CD4-positive, alpha-beta T cell (primary cell): ENCODE measurements at regions of chr15 and their contacts with region 1.

Region 1: DNA sequence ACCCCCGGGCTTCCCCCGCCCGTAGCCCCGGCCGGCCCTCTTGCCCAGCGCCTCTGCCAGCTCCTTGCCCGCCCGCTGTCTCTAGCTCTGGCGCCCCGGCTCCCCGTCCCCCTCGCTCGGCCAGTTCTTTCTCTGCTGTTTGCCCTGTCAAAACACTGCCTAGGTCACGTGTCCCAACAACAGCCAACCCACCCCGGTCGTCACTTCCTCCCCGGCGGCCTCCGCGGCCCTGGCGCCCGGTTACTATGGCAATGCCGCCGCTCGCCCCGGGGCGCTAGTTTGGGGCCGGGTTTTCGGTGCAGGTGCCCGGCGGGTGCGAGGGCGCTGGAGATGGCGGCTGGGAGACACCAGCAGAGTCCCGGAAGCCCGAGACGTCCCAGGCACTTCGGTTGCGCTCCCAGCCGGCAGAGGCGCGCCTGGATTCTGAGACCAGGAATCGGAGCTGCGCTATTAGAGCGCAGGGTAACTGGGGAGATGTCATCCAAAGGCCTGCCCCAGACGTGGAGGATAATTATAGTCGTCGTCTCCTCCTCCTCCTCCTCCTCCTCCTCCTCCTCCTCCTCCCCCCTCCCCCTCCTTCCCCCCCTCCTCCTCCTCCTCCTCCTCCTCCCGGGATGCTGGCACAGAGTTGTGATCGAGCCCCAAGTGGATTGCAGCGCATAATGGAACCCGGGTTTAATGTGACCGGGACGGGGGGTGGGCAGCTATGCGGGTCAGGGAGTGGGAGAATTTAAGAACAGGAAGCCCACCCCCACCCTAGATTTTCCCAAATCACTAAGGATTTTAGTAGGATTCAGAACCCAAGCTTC is at the start of gene ATOSA:
- DNase-seq: peak; percentile 83 to 96 (median 90)
- ATAC-seq: peak; percentile 68
- H3K4me3 ChIP-seq: peak within 1 kb of the TSS; percentile 94
- H3K4me3 Mint-ChIP-seq: peak within 1 kb of the TSS; percentile 96
- H3K27ac ChIP-seq: peak within 1 kb of the TSS; percentile 97 to 99
- H3K27ac Mint-ChIP-seq: peak within 1 kb of the TSS; percentile 97
- H3K4me1 ChIP-seq: peaks cover 14% of the 10 kb centered on the region
- H3K4me1 Mint-ChIP-seq: peaks cover 75% of the 10 kb centered on the region
- H3K27me3 ChIP-seq: no peaks in the 10 kb centered on the region
- H3K27me3 Mint-ChIP-seq: no peaks in the 10 kb centered on the region
- CTCF ChIP-seq: no peak
- total RNA-seq, gene ATOSA: 137 TPM

Region 2: DNA sequence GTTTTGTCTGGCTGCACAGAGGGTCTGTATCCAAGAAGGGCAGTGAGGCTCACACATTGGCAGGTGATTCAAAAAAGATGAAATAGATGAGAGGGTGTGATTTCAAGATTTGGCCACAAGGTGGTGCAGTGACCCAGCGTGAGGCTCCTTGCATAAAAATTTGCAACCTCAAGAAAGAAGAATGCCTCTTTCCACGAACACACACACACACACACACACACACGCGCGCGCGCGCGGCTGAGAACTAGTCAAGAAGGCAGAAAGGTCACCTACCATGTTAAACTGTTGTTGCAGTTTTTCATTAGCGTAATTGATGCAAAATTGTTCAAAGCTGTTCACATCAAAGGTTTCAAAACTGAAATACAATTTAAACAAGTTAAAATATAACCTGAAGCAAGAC is 423.1 kb before region 1 on chr15:
- CTCF ChIA-PET with region 1: no interaction called
- POLR2A ChIA-PET with region 1: no interaction called
- intact Hi-C with region 1: loop called (anchors 5 to 10 kb)
- DNase-seq: peak; percentile 58 to 90 (median 72)
- ATAC-seq: peak; percentile 96
- H3K4me3 ChIP-seq: no peak overlapping the region
- H3K4me3 Mint-ChIP-seq: peak overlapping the region; percentile 79
- H3K27ac ChIP-seq: no peak overlapping the region
- H3K27ac Mint-ChIP-seq: peak overlapping the region; percentile 34
- H3K4me1 ChIP-seq: peaks cover 14% of the 10 kb centered on the region
- H3K4me1 Mint-ChIP-seq: peaks cover 12% of the 10 kb centered on the region
- H3K27me3 ChIP-seq: no peaks in the 10 kb centered on the region
- H3K27me3 Mint-ChIP-seq: no peaks in the 10 kb centered on the region
- CTCF ChIP-seq: peak; percentile 76

Region 3: GRCh38 chr15:52568601-52569256 is 110.7 kb before region 1 on chr15 and contains the start of gene ARPP19:
- CTCF ChIA-PET with region 1: no interaction called
- POLR2A ChIA-PET with region 1: interaction called, 5 read pairs
- intact Hi-C with region 1: loop called (anchors 2 to 5 kb)
- DNase-seq: peak; percentile 60 to 93 (median 71)
- ATAC-seq: peak; percentile 72
- H3K4me3 ChIP-seq: peak within 1 kb of the TSS; percentile 75
- H3K4me3 Mint-ChIP-seq: peak within 1 kb of the TSS; percentile 99
- H3K27ac ChIP-seq: peak within 1 kb of the TSS; percentile 91 to 93
- H3K27ac Mint-ChIP-seq: peak within 1 kb of the TSS; percentile 98
- H3K4me1 ChIP-seq: peaks cover 35% of the 10 kb centered on the region
- H3K4me1 Mint-ChIP-seq: peaks cover 45% of the 10 kb centered on the region
- H3K27me3 ChIP-seq: no peaks in the 10 kb centered on the region
- H3K27me3 Mint-ChIP-seq: no peaks in the 10 kb centered on the region
- CTCF ChIP-seq: peak; percentile 24
- total RNA-seq, gene ARPP19: 134 to 146 TPM

Region 4: DNA sequence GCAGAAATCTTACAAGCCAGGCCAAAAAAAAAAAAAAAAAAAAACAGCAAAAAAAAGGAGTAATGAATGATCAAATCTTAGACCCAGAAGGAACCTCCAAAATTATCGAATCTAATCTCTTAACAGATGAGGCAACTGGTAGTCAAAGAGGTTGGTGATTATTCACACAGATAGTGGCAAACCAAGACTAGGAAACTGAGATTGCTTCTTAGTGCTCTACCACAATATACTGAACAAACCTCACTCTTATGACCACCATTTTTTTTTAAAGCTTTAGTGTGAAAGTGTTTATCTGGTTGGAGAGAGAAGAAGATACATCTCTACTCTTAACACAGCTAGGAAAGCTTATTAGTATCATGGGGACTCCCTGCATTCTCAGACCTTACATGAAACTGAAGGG is 17.5 kb before region 1 on chr15:
- CTCF ChIA-PET with region 1: no interaction called
- POLR2A ChIA-PET with region 1: interaction called, 7 read pairs
- intact Hi-C with region 1: loop called in 1 of 2 experiments (anchors 2 kb)
- DNase-seq: no peak
- ATAC-seq: no peak
- H3K4me3 ChIP-seq: no peak overlapping the region
- H3K4me3 Mint-ChIP-seq: no peak overlapping the region
- H3K27ac ChIP-seq: no peak overlapping the region
- H3K27ac Mint-ChIP-seq: no peak overlapping the region
- H3K4me1 ChIP-seq: peaks cover 6% of the 10 kb centered on the region
- H3K4me1 Mint-ChIP-seq: peaks cover 54% of the 10 kb centered on the region
- H3K27me3 ChIP-seq: no peaks in the 10 kb centered on the region
- H3K27me3 Mint-ChIP-seq: no peaks in the 10 kb centered on the region
- CTCF ChIP-seq: no peak

Region 5: DNA sequence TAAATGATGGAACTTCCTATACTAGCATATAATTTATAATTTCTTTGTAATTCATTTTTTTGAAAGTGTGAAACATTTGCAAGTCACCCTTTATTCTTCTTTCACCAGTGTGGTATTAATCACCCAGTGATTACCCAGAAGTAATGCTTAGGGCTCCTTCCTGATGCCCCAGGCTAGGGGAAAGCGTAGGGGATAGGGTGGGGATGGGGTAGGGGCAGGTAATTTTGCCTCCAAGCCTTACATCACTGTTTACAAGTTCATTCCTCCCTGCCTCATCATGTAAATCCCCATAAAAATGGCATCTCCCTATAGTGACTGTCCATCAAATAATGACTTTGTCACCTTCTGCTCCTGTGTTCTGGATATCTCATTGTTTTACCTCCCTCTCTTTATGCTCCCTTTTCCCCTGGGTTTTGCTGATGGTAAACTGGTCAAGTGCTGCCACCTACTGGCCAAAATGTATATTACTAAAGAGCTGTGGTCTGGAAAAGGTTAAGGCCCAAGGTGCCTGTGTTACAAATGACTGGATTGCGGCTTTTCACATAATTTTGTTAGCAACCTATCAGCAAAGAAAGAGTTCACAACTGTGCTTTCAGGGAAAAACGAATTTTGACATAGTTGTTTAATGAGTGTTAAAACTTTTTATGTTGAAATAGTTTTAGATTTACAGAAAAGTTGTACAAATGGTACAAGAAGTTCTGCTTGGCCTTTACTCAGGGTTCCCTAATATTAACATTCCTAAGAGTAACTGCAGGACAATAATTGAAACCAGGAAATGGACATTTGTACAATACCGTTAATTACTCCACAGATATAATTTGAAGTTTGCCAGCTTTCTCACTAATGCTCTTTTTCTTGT is 56.0 kb after region 1 on chr15:
- CTCF ChIA-PET with region 1: interaction called, 5 read pairs
- POLR2A ChIA-PET with region 1: interaction called, 11 read pairs
- intact Hi-C with region 1: loop called (anchors 1 to 2 kb)
- DNase-seq: peak; percentile 37 to 88 (median 58)
- ATAC-seq: peak; percentile 95
- H3K4me3 ChIP-seq: no peak overlapping the region
- H3K4me3 Mint-ChIP-seq: no peak overlapping the region
- H3K27ac ChIP-seq: no peak overlapping the region
- H3K27ac Mint-ChIP-seq: no peak overlapping the region
- H3K4me1 ChIP-seq: peaks cover 3% of the 10 kb centered on the region
- H3K4me1 Mint-ChIP-seq: peaks cover 2% of the 10 kb centered on the region
- H3K27me3 ChIP-seq: no peaks in the 10 kb centered on the region
- H3K27me3 Mint-ChIP-seq: peaks cover 4% of the 10 kb centered on the region
- CTCF ChIP-seq: peak; percentile 89